Posterior cingulate gyrus (tissue), 11 donors: ENCODE measurements at regions of chr1 and their contacts with region 1.

Region 1: GRCh38 chr1:7218210-7218832 is 433.1 kb downstream of the CAMTA1 start:
- DNase-seq: peak in 2 of 10 donors; percentile 29 to 39

Region 2: GRCh38 chr1:6727535-6727934 is 490.8 kb before region 1 on chr1:
- intact Hi-C with region 1: loop called (anchors 5 kb)
- DNase-seq: peak in 4 of 10 donors; percentile 29 to 85 (median 42)

Region 3: DNA sequence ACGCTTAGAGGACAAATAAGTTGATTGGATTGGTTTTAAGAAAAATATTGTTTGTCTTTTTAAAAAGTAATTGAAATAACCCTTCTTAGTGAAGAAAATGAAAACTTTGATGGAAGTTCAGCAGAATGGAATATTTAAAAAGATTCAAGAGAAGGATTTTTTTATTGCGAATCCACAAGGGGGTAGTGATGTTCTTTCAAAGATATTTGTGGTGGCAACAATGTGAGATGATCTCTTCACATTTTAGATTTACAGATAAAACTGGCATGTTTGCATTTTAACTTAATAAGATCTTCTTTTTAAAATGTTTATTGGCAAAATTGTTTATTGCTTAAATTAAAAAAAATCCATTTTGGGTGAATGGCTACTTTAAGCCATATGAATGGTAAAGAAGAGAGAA is 424.2 kb before region 1 on chr1:
- intact Hi-C with region 1: loop called (anchors 5 kb)
- DNase-seq: no peak

Region 4: GRCh38 chr1:7186382-7187109 is 31.8 kb before region 1 on chr1:
- intact Hi-C with region 1: no loop called
- DNase-seq: no peak